Sigmoid colon (tissue), 7 donors: ENCODE measurements at regions of chr20 and their contacts with region 1.

Region 1: GRCh38 chr20:56843817-56844216 is 214.7 kb downstream of the TFAP2C start:
- DNase-seq: no peak
- H3K4me3 ChIP-seq: no peak overlapping the region
- H3K27ac ChIP-seq: peak overlapping the region in 2 of 4 donors; percentile 70 to 72
- H3K4me1 ChIP-seq: peaks cover 0 to 71% (median 52%) of the 10 kb centered on the region in 4 donors
- H3K27me3 ChIP-seq: no peaks in the 10 kb centered on the region
- CTCF ChIP-seq: no peak
- EP300 ChIP-seq: no peak
- POLR2A ChIP-seq: no peak

Region 2: GRCh38 chr20:56865055-56865454 is 21.2 kb after region 1 on chr20:
- intact Hi-C with region 1: loop called (anchors 2 kb)
- DNase-seq: peak; percentile 92
- H3K4me3 ChIP-seq: no peak overlapping the region
- H3K27ac ChIP-seq: peak overlapping the region in 3 of 4 donors; percentile 60 to 69 (median 68)
- H3K4me1 ChIP-seq: peaks cover 0 to 31% (median 20%) of the 10 kb centered on the region in 4 donors
- H3K27me3 ChIP-seq: no peaks in the 10 kb centered on the region
- CTCF ChIP-seq: no peak
- EP300 ChIP-seq: no peak
- POLR2A ChIP-seq: no peak